ENCODE measurements at regions of chr5 and their contacts with region 1.

Region 1: GRCh38 chr5:36695677-36696673 is 89.6 kb downstream of the SLC1A3 start:
- DNase-seq: peak; percentile 55 to 65
- H3K4me3 ChIP-seq: no peak overlapping the region
- H3K27ac ChIP-seq: no peak overlapping the region
- H3K4me1 ChIP-seq: peaks cover 5% of the 10 kb centered on the region; the same call in 1 of the 2 replicates
- H3K27me3 ChIP-seq: no peaks in the 10 kb centered on the region
- CTCF ChIP-seq: peak; percentile 97

Region 2: DNA sequence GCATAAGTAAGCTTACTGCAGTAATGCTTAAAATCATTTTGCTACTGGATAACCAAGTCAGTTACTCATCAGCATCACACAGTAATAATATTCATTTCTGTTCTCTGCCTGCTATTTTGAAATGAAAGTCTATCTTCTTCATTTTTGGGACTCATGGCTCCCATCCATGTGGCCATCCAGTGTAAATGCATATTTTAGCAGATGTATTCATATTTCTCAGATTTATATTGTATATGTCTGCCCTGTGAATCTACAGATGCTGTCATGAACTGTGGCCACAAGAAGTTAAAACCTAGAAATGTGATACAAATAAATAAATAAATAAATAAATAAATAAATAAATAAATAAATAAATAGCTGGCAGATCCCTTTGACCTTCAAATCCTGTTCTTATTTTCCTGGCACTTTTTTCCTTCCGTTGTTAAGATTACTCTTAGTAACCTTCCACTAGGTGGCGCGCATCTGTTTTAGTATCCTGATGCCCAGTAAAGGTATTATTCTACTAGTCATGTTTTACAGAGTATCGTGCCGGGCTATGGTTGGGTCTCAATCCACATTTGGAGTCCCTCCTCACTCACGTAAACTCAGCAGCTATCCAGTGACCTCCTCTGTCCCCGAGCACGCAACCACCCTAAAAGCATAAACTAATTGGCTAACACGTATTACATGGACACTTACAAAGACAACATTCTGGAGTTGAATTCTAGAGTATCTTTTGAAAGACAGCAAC is 918.5 kb before region 1 on chr5:
- CTCF ChIA-PET with region 1: no interaction called
- POLR2A ChIA-PET with region 1: no interaction called
- intact Hi-C with region 1: loop called (anchors 5 kb)
- DNase-seq: peak; percentile 44 to 47
- H3K4me3 ChIP-seq: no peak overlapping the region
- H3K27ac ChIP-seq: no peak overlapping the region
- H3K4me1 ChIP-seq: no peaks in the 10 kb centered on the region
- H3K27me3 ChIP-seq: no peaks in the 10 kb centered on the region
- CTCF ChIP-seq: peak; percentile 87